Activated CD8-positive, alpha-beta T cell treated with anti-CD3 and anti-CD28 coated beads for 36 hours (primary cell): ENCODE measurements at regions of chr15 and their contacts with region 1.

Region 1: GRCh38 chr15:37764733-37765191 is 169.7 kb upstream of the TMCO5A start:
- DNase-seq: peak; percentile 44
- ATAC-seq: peak; percentile 70
- H3K4me3 Mint-ChIP-seq: no peak overlapping the region
- H3K27ac Mint-ChIP-seq: no peak overlapping the region
- H3K4me1 Mint-ChIP-seq: peaks cover 16% of the 10 kb centered on the region
- H3K27me3 Mint-ChIP-seq: peaks cover 2% of the 10 kb centered on the region
- CTCF ChIP-seq: peak; percentile 70

Region 2: GRCh38 chr15:37698679-37699078 is 66.1 kb before region 1 on chr15:
- CTCF ChIA-PET with region 1: no interaction called
- POLR2A ChIA-PET with region 1: no interaction called
- intact Hi-C with region 1: no loop called
- DNase-seq: no peak
- ATAC-seq: no peak
- H3K4me3 Mint-ChIP-seq: no peak overlapping the region
- H3K27ac Mint-ChIP-seq: no peak overlapping the region
- H3K4me1 Mint-ChIP-seq: no peaks in the 10 kb centered on the region
- H3K27me3 Mint-ChIP-seq: no peaks in the 10 kb centered on the region
- CTCF ChIP-seq: no peak

Region 3: DNA sequence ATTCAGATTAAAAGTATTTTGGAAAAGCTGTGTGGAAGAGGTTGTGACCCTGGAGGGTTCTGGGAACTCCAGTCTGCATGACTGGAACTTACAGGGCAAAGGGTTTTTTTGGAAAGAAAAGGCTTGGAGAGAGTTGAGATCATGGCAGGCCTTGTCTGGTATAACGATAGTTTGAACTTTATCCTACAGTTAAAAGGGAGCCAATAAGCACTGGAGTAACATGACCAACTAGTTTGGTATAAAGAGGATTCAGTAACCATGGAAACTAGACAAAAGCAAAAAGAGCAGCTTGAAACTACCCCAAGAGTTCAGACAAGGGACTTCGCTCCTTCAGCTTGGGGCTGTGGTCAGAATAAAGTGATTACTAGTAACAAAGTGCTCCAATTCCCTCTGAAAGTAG is 18.5 kb after region 1 on chr15:
- CTCF ChIA-PET with region 1: no interaction called
- POLR2A ChIA-PET with region 1: no interaction called
- intact Hi-C with region 1: no loop called
- DNase-seq: no peak
- ATAC-seq: no peak
- H3K4me3 Mint-ChIP-seq: no peak overlapping the region
- H3K27ac Mint-ChIP-seq: no peak overlapping the region
- H3K4me1 Mint-ChIP-seq: no peaks in the 10 kb centered on the region
- H3K27me3 Mint-ChIP-seq: no peaks in the 10 kb centered on the region
- CTCF ChIP-seq: no peak

Region 4: GRCh38 chr15:37891766-37892368 is 127.1 kb after region 1 on chr15:
- CTCF ChIA-PET with region 1: interaction called, 10 read pairs
- POLR2A ChIA-PET with region 1: no interaction called
- intact Hi-C with region 1: no loop called
- DNase-seq: no peak
- ATAC-seq: peak; percentile 49
- H3K4me3 Mint-ChIP-seq: no peak overlapping the region
- H3K27ac Mint-ChIP-seq: no peak overlapping the region
- H3K4me1 Mint-ChIP-seq: no peaks in the 10 kb centered on the region
- H3K27me3 Mint-ChIP-seq: peaks cover 14% of the 10 kb centered on the region
- CTCF ChIP-seq: peak; percentile 67